ENCODE measurements at regions of chr14 and their contacts with region 1.

Region 1: DNA sequence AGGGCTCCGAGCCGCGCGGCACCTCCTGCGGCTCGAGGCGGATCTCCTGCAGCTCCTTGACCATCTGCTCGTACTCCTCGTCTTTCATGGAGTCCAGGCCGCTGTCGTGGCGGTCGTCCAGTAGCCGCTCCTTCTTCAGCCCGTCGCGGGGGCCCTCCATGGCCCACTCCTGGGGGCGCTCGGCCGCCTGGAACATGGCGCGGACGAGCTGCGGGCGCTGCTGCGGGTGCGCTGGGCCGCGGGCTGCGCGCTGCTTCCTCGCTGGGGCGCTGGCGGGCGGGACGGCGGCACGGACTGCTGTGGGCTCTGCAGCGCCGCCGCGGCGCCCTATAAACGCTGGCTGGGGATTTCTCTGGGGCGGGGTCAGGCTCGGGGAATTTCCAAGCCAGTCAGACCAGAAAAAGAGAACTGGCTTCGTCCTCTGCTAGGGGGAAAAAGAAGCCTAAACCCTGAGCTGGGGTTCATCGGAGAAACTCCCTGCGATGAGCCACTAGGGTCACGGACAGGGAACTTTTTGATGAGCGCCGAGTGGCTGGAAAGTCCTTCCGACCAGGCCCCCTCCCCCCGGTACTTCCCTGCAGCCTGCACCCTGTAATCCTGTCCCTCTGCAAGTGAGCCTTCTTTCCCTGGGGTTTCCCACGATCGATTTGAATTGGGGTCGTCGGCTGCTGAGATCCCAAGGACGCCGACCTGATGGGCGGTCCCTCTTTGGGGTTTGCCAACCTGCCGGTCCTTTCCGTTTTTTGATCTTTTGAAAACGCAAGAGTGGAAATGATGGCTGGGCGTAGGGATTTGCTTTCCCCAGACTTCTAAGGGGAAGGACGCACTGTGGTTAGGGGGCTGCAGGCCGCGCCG is at the start of gene NFKBIA:
- DNase-seq: peak; percentile 91 to 95 (median 93)
- H3K4me3 ChIP-seq: peak within 1 kb of the TSS; percentile 91 to 100 (median 98)
- H3K27ac ChIP-seq: peak within 1 kb of the TSS; percentile 86 to 100 (median 99)
- H3K4me1 ChIP-seq: peaks cover 24 to 52% of the 10 kb centered on the region in 2 donors
- H3K27me3 ChIP-seq: no peaks in the 10 kb centered on the region
- CTCF ChIP-seq: peak in 4 of 6 experiments; percentile 16 to 31 (median 26)
- POLR2A ChIP-seq: peak; percentile 100
- total RNA-seq, gene NFKBIA: 100 to 677 (median 292) TPM

Region 2: DNA sequence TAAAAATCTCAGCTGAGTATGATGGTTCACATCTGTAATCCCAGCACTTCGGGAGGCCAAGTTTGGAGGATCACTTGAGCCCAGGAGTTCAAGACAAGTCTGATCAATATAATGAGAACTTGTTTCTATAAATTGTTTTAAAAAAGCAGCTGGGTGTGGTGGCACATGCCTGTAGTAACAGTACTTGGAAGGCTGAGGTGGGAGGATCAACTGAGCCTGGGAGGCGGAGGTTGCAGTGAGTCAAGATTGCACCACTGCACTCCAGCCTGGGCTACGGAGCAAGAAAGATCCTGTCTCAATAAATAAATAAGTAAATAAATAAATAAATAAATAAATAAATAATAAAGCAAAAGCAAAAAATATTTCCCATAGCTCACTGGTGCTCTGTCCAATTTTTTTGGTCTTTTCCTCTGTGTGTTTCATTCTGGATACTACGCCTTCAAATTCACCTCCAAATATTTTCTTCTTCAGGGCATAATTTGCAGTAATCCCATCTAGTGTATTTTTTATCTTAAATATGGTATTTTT is 742.1 kb before region 1 on chr14:
- intact Hi-C with region 1: no loop called
- DNase-seq: no peak
- H3K4me3 ChIP-seq: no peak overlapping the region
- H3K27ac ChIP-seq: no peak overlapping the region
- H3K4me1 ChIP-seq: peaks cover 0 to 7% of the 10 kb centered on the region in 2 donors
- H3K27me3 ChIP-seq: no peaks in the 10 kb centered on the region
- CTCF ChIP-seq: no peak
- POLR2A ChIP-seq: no peak

Region 3: DNA sequence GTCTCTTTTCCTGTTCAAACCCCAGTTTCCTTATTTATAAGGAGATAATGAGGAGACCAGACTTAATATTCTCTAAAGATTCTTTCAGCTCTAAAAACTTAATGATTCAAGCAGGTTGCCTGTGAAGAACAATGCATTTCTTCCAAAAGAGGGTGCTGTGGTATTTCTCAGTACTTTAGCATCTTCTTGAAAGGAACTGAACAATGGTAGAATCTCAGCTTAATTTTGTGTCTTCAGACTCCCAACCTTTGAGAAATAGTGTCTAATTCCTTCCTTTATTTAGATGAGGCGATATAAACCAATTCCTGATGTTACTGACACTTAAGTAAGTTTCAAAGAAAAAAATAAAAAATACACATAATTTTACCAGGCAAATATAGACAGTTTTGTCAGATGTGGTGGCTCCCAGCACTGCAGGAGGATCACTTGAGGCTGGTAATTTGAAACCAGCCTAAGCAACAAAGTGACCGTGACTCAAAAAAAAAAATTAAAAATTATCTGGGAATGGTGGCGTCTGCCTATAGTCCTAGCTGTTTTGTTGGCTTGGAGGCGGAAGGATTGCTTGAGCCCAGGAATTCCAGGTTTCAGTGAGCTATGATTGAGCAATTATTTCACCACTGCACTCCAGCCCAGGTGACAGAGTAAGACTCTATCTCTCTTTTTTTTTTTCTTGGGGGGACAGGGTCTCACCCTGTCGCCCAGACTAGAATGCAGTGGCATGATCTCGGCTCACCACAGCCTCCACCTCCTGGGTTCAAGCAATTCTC is 189.4 kb before region 1 on chr14:
- intact Hi-C with region 1: loop called in 1 of 2 experiments (anchors 5 kb)
- DNase-seq: no peak
- H3K4me3 ChIP-seq: no peak overlapping the region
- H3K27ac ChIP-seq: no peak overlapping the region
- H3K4me1 ChIP-seq: peaks cover 0 to 18% of the 10 kb centered on the region in 2 donors
- H3K27me3 ChIP-seq: no peaks in the 10 kb centered on the region
- CTCF ChIP-seq: peak in 5 of 6 experiments; percentile 28 to 58 (median 47)
- POLR2A ChIP-seq: no peak

Region 4: DNA sequence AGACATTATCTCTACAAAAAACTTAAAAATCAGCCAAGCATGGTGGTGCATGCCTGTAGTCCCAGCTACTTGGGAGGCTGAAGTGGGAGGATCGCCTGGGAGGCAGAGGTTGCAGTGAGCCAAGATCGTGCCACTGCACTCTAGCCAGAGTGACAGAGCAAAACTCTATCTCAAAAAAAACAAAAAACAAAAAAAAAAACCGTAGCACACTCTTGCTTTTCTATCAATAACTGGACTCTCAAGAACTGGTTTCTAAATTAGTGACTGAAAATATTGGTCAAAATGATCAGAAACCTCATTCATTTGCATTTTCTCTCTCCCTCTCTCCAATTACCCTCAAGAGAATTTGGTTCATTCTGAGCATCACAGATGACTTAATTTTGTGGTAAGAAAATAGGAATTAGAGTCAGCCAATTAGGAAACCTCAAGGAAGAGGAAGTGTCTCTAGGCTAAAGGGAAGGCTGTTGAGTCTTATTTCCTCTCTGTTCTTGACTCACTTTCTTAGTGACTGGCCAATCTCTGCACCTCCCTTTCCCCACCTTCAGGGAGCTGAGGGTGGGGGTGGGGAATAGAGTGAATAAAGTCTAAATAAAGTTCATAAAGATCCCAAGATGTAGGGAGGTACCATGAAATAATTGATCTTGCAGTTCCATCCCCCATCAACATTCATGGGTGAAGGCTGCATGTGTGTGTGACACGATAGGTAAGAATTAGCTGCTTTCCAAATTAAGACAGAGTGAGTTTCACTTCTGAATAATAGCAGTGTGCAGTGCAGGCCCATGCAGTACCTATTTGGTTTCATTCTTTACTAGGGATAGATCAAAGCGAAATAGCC is 119.3 kb before region 1 on chr14:
- intact Hi-C with region 1: loop called in 1 of 2 experiments (anchors 5 kb)
- DNase-seq: no peak
- H3K4me3 ChIP-seq: no peak overlapping the region
- H3K27ac ChIP-seq: peak overlapping the region in 2 of 5 donors; percentile 4 to 53
- H3K4me1 ChIP-seq: no peaks in the 10 kb centered on the region
- H3K27me3 ChIP-seq: no peaks in the 10 kb centered on the region
- CTCF ChIP-seq: no peak
- POLR2A ChIP-seq: no peak

Region 5: GRCh38 chr14:35336494-35337268 is 68.0 kb before region 1 on chr14:
- intact Hi-C with region 1: loop called (anchors 2 to 10 kb)
- DNase-seq: peak; percentile 95 to 99 (median 98)
- H3K4me3 ChIP-seq: no peak overlapping the region
- H3K27ac ChIP-seq: peak overlapping the region; percentile 93 to 97 (median 96)
- H3K4me1 ChIP-seq: peaks cover 51 to 90% of the 10 kb centered on the region in 2 donors
- H3K27me3 ChIP-seq: no peaks in the 10 kb centered on the region
- CTCF ChIP-seq: no peak
- POLR2A ChIP-seq: peak; percentile 64 to 95

Region 6: DNA sequence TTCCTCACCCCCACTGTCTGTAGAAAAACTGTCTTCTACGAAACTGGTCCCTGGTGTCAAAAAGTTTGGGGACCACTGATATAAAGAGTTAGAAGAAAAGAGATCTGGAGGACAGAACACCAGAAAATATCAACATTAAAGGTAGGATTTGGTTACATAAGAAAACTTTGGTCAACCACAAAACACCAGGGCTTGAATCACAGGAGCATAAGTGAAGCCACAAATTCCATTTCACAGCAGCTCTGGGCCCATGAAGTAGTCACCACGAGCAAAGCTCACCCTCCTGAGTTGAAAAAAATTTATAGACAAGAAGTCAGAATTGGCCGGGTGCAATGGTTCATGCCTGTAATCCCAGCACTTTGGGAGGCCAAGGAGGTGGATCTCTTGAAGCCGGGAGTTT is 385.0 kb after region 1 on chr14:
- intact Hi-C with region 1: no loop called
- DNase-seq: no peak
- H3K4me3 ChIP-seq: no peak overlapping the region
- H3K27ac ChIP-seq: no peak overlapping the region
- H3K4me1 ChIP-seq: peaks cover 0 to 12% of the 10 kb centered on the region in 2 donors
- H3K27me3 ChIP-seq: no peaks in the 10 kb centered on the region
- CTCF ChIP-seq: no peak
- POLR2A ChIP-seq: no peak

Measured in adrenal gland (tissue), 19 donors.